Sciatic nerve (tissue), 2 donors: ENCODE measurements at regions of chr7 and their contacts with region 1.

Region 1: DNA sequence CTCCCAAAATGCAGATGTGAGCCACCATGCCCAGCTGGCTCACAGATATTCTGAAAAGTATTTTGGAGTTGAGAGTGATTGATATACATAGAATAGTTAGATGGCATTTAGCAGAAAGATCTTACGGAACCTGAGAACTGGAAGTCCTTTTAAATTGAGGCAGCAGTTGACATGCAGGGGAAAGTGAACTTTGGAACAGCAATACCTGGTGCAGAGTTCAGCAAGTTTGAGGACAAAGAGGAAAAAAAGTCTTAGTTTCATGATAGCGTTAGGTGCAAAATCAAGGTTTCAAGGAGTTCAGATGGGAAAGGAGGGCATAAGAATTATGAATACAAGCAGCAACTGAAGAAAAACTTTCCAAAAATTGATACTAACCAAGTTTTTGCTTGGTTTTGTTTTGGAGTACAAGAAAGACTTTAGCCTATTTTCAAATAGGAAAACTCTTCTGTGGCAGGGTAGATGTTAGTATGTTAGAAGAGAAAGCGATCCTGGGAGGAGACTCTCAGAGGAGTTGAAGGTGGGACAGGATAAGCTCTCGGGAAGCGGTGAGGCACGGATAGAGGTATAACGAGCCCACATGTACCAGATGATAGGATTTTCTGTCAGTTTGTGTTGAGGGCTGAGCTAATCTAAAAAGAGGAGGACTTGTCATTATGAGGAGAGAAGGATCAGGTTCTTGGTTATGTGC is 28.0 kb upstream of the STMP1 start:
- DNase-seq: no peak
- ATAC-seq: no peak

Region 2: DNA sequence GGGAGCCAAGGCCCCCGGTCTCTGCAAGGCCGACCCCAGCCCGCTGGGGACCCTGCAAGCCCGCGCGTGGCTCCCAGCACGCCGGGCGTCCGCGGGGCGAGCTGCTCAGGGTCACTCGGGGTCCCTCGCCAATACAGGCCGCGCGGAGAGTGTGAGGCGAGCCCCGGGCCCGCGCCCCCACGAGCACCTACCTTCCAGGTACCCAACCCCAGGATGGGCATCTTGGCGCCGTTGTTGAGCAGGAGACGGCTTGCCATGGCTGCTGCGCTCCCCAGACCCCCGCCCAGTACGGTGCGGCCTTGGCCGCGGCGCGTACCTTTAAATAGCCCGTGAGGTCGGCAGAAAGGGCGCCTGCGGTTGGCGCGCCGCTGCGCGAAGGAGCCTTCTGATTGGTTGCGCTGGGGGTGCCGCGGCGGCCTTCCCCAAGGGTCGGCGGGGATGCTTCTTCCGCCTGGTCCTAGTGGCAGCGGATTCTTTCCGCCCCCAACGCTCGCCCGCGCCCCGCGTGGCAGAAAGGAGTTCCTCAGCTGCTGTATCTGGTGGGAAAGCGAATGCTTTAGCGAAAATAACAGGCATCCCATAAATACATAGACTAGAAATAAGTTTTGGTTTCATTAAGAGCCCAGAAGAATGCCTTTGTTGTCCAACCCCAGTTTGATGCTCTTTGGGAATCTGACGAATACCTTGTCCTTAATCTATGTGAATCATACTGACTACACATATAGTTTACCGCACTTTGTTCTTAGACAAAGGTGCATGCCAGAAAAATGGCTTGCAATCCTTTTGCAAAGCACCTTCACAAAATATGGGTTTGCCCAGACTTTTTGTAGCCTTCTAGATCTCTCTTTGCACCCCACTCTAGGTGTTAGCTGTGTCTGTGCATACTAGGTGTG is 1175.3 kb before region 1 on chr7 and contains the start of gene AKR1B1:
- intact Hi-C with region 1: loop called (anchors 5 kb)
- DNase-seq: peak; percentile 93
- ATAC-seq: peak; percentile 98
- total RNA-seq, gene AKR1B1: 273 TPM

Region 3: GRCh38 chr7:134483296-134483695 is 1151.0 kb before region 1 on chr7:
- intact Hi-C with region 1: no loop called
- DNase-seq: no peak
- ATAC-seq: no peak

Region 4: DNA sequence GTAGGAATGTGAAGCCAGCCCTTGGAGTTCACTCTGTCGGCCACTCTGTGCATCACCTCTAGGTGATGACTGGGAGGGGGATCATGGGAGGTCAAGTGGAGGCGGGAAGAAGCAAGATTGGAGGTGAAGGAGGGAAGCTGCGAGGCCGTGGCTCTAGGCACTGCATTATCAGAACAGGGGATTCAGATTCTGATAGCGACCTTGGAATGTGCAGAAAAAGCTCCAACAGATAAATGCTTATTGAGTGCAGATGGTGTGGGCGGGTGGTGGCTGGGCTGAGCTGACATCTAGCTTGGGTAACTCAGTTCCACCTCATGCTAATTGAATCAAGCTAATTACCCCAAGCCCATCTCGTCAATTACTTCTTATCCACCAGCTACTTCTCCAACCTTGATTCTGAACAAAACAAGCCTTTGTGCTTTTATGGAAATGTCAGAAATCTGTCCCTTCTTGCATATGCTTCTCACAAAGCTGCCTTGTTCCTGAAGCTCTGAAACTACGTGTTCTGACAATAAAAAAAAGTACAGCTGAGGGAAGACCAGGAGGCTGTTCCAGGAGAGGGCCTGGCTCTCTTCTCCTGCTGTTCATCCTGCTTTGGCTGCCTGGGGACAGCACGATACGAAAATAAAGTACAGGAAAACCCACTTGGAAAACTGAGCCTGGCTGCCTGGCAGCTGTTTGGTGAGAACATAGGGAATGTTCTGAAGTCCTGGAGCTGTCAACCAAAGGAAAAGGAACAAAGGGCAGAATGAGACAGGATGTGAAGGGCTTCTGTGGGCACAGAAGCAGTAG is 373.2 kb before region 1 on chr7:
- intact Hi-C with region 1: loop called (anchors 10 kb)
- DNase-seq: no peak
- ATAC-seq: peak; percentile 84